ENCODE measurements at regions of chr15 and their contacts with region 1.

Region 1: DNA sequence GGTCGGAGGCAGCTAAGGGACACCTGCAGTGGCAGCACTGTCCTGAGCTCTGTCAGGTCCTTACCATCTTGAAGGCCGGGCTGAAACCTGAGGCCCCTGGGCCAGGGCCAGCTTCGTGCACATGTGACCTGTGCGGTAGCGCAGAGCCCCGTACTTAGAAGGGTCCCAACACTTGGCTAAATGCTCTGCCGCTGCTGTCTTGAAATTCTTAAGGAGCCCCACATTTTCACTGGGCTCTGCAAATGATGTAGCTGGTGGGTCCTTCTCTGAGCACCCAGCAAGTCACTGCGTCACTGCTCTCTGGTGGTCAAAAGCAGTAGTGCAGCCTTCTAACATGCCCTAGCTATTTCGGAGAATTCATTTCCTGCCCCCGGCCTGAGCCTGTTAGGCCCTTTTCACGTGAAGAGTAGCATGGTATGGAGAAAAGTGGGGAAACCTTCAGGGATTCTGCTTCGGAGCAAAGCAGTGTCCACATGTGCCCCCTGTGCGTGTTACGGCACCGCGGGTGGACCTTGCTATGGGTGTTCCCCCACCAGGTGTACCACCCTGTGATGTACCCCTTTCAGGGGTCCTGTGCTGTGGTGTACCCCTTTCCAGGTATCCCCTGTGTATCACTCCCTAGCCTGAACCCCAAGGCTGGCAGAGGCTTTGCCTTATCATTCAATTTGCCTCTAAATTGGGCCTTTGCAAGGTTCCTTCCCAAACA is 79.7 kb downstream of the TMEM266 start:
- DNase-seq: peak; percentile 89
- H3K4me3 Mint-ChIP-seq: no peak overlapping the region
- H3K27ac Mint-ChIP-seq: no peak overlapping the region
- H3K4me1 Mint-ChIP-seq: peaks cover 7% of the 10 kb centered on the region
- H3K27me3 Mint-ChIP-seq: peaks cover 12% of the 10 kb centered on the region

Region 2: GRCh38 chr15:75723847-75724660 is 415.5 kb before region 1 on chr15:
- CTCF ChIA-PET with region 1: interaction called, 7 read pairs
- intact Hi-C with region 1: loop called (anchors 2 kb)
- DNase-seq: peak; percentile 54
- H3K4me3 Mint-ChIP-seq: no peak overlapping the region
- H3K27ac Mint-ChIP-seq: no peak overlapping the region
- H3K4me1 Mint-ChIP-seq: peaks cover 6% of the 10 kb centered on the region
- H3K27me3 Mint-ChIP-seq: peaks cover 8% of the 10 kb centered on the region

Region 3: GRCh38 chr15:76057332-76058000 is 82.1 kb before region 1 on chr15:
- CTCF ChIA-PET with region 1: interaction called, 199 read pairs
- intact Hi-C with region 1: loop called (anchors 1 kb)
- DNase-seq: peak; percentile 62
- H3K4me3 Mint-ChIP-seq: no peak overlapping the region
- H3K27ac Mint-ChIP-seq: no peak overlapping the region
- H3K4me1 Mint-ChIP-seq: peaks cover 29% of the 10 kb centered on the region
- H3K27me3 Mint-ChIP-seq: peaks cover 34% of the 10 kb centered on the region

Region 4: DNA sequence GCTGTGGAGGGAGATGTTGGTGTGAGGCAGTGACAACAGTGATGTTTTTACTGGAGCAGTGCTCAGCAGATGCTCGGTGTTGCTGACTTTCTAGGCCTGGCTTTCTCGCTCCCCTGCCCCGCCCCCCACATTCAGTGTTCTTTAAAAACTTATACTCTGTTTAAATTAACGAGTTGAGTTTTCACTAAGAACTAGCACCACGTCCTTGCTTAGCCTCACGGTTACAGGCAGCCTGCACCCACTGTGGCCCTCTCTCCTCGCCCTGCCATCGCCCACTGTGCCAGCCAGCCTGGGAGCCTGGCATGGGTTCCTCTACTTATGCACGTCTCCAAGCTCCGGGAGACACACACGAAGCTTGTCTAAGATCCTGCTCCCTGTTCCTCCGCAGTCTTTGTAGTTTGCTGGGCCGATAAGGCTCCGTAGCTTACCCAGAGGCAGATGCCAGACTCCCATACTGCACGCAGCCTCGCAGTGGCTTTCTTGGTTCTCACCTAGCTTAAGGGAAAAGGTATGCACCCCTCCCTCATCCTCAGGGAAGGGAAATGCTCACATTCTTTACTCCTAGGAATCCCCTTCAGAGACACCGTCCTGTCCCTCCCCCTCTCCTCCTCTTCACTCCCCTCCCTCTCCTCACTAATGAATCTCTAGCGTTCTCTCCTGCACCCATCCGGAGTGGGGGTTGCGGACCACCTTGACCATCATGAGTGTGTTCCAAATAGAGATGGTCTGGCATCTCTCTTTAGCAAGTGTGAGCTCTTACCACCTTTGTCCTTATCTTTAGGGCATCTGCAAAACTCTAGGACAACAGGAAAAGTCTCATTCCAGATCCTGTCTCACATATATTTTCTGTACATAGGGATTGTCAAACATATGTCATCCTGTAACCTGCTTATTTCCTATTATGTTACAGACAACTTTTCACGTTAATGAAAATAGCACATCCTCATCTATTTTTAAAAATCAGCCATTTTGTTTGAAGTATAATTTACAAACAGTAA is 23.3 kb before region 1 on chr15:
- CTCF ChIA-PET with region 1: interaction called, 12 read pairs
- intact Hi-C with region 1: no loop called
- DNase-seq: no peak
- H3K4me3 Mint-ChIP-seq: no peak overlapping the region
- H3K27ac Mint-ChIP-seq: no peak overlapping the region
- H3K4me1 Mint-ChIP-seq: no peaks in the 10 kb centered on the region
- H3K27me3 Mint-ChIP-seq: peaks cover 5% of the 10 kb centered on the region

Region 5: DNA sequence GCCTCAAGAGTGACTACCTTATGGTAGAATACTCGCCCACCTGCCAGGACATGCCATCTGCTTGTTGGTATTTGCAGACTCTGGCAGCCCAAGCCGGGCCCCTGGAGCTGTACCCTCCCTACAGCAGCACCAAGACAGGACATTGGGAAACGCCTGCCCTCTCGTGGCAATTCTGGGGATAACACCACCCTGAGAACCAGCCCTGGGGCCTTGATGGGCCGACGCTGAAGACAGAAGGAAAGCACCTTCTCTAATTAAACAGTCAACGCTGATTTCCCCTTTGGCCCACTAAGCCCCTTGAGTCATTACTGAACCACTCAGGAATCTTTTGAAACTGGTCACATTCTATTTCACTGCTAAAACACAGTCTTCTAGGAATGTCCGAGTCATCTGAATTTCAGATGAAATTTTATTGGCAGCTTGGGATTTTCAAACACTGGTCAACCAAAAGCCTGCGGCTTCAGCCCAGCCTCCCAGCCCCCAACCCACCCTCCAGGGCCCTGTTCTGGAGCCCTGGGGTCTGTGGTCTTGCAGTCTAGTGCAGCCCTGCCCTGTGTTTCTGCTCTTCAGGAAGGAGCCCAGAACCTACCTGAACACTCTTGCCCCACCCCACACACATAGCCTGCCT is 11.6 kb after region 1 on chr15:
- CTCF ChIA-PET with region 1: interaction called, 69 read pairs
- intact Hi-C with region 1: loop called (anchors 1 kb)
- DNase-seq: peak; percentile 93
- H3K4me3 Mint-ChIP-seq: no peak overlapping the region
- H3K27ac Mint-ChIP-seq: no peak overlapping the region
- H3K4me1 Mint-ChIP-seq: peaks cover 22% of the 10 kb centered on the region
- H3K27me3 Mint-ChIP-seq: peaks cover 13% of the 10 kb centered on the region

Region 6: DNA sequence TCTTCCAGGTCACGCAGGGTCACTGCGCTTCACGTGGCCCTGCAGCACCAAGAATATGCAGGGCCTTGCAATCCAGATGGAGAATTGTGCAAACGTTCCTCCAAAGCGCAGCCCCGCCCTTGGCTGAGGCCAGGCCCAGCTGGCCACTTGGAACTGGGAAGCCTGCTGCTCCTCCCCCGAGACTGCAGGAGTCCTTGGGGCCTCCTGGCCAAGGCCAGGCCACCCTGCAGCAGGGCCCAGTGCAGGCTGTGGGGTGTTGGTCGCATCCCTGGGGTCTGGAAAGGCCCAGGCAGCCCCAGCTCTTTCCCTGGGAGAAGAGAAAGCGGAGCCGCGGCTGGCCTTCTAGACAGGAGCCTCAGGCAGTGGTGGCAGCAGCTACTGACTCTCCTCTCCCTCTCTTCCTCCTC is 24.0 kb after region 1 on chr15:
- CTCF ChIA-PET with region 1: no interaction called
- intact Hi-C with region 1: no loop called
- DNase-seq: no peak
- H3K4me3 Mint-ChIP-seq: no peak overlapping the region
- H3K27ac Mint-ChIP-seq: no peak overlapping the region
- H3K4me1 Mint-ChIP-seq: no peaks in the 10 kb centered on the region
- H3K27me3 Mint-ChIP-seq: no peaks in the 10 kb centered on the region